Activated CD4-positive, alpha-beta memory T cell treated with anti-CD3 and anti-CD28 coated beads for 36 hours (primary cell): ENCODE measurements at regions of chr12 and their contacts with region 1.

Region 1: GRCh38 chr12:45990468-45991283 is at the start of gene SCAF11:
- DNase-seq: peak; percentile 100
- H3K4me3 Mint-ChIP-seq: peak within 1 kb of the TSS; percentile 97
- H3K27ac Mint-ChIP-seq: peak within 1 kb of the TSS; percentile 99
- H3K4me1 Mint-ChIP-seq: peaks cover 40% of the 10 kb centered on the region
- H3K27me3 Mint-ChIP-seq: peaks cover 3% of the 10 kb centered on the region
- total RNA-seq, gene SCAF11: 114 to 116 TPM

Region 2: DNA sequence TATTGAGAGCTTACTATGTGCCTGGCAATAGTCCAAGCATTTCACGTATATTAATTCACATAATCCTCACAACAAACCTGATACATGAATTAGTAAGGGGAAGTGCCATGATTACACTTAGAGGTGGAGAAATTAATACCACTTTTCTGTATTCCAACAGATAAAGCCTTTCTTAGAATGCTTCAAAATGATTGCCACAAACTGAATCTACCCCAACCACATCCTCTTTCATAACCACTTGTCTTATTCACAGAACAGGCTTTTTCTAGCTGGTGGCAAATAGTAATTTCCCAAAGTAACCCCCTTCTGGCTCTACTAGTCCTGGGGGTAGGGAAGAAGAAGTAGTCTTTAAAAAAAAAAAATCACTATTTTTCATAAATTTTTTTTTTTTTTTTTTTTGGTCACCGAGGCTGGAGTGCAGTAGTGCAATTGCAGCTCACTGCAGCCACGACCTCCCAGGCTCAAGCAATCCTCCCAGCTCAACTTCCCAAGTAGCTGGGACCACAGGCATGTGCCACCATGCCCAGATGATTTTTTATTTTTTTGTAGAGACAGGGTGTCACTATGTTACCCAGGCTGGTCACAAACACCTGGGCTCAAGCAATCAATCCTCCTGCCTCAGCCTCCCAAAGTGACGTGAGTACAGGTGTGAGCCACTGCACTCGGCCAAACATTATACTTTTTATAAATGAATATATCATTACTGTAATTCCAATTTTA is 320.2 kb before region 1 on chr12:
- CTCF ChIA-PET with region 1: no interaction called
- POLR2A ChIA-PET with region 1: no interaction called
- intact Hi-C with region 1: loop called (anchors 10 kb)
- DNase-seq: no peak
- H3K4me3 Mint-ChIP-seq: no peak overlapping the region
- H3K27ac Mint-ChIP-seq: no peak overlapping the region
- H3K4me1 Mint-ChIP-seq: peaks cover 27% of the 10 kb centered on the region
- H3K27me3 Mint-ChIP-seq: no peaks in the 10 kb centered on the region

Region 3: GRCh38 chr12:46124848-46125619 is 134.4 kb after region 1 on chr12:
- CTCF ChIA-PET with region 1: interaction called, 5 read pairs
- POLR2A ChIA-PET with region 1: no interaction called
- intact Hi-C with region 1: loop called (anchors 5 kb)
- DNase-seq: peak; percentile 60
- H3K4me3 Mint-ChIP-seq: peak overlapping the region; percentile 34
- H3K27ac Mint-ChIP-seq: peak overlapping the region; percentile 21
- H3K4me1 Mint-ChIP-seq: peaks cover 5% of the 10 kb centered on the region
- H3K27me3 Mint-ChIP-seq: peaks cover 12% of the 10 kb centered on the region

Region 4: DNA sequence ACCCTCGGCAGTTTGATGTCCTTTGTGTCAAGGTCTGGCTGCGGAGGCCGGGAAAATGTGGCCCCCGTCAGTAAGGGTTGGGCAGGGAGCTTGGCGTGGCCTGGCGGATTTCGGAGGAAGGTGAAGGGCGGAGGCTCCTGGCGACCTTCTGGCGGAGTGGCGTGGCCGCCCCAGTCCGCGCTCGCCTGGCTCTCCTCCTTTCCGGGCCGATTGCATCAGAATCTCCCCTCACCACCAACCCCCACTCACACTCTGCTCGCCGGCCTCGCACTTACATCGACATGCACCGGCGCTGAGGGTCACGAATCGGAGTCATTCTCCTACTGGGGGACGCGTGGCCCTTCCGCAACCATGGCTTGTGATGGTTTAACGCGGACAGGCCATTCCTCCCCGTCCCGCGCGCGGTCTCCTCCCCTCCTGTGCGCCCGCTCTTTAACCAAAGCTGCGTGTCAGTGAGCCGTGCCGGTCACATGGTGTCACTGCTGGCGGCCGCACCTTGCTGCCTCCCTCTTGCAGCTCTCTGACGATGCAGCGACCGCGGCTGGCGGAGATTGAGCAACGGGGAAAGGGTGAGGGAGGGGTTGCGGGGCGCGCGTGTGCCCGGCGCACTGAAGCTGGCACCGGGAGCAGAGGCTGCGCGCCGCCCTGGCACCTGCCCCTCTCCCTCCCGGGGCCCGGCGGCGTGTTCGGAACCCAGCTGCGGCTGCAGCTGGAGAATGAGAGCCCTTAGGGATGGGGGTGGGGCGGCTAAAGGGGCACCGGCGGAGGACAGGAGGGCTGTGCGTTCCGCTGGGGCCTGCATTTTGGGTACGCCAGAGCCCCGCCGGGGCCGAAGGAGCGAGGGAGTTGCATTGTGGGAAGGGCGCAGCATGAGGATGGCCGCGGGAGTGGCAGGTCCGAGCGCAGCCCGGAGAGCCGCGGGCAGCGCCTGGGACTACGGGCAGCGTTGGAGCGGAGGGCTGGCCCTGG is 278.2 kb after region 1 on chr12 and contains the start of gene SLC38A1:
- CTCF ChIA-PET with region 1: no interaction called
- POLR2A ChIA-PET with region 1: interaction called, 32 read pairs
- intact Hi-C with region 1: loop called (anchors 1 kb)
- DNase-seq: peak; percentile 92
- H3K4me3 Mint-ChIP-seq: no peak within 1 kb of the TSS
- H3K27ac Mint-ChIP-seq: no peak within 1 kb of the TSS
- H3K4me1 Mint-ChIP-seq: peaks cover 23% of the 10 kb centered on the region
- H3K27me3 Mint-ChIP-seq: no peaks in the 10 kb centered on the region
- total RNA-seq, gene SLC38A1: 142 TPM

Region 5: GRCh38 chr12:46382964-46383653 is 392.4 kb after region 1 on chr12:
- CTCF ChIA-PET with region 1: no interaction called
- POLR2A ChIA-PET with region 1: no interaction called
- intact Hi-C with region 1: loop called (anchors 1 kb)
- DNase-seq: peak; percentile 96
- H3K4me3 Mint-ChIP-seq: peak overlapping the region; percentile 80
- H3K27ac Mint-ChIP-seq: peak overlapping the region; percentile 92
- H3K4me1 Mint-ChIP-seq: peaks cover 27% of the 10 kb centered on the region
- H3K27me3 Mint-ChIP-seq: no peaks in the 10 kb centered on the region

Region 6: GRCh38 chr12:46661110-46661845 is 670.6 kb after region 1 on chr12:
- CTCF ChIA-PET with region 1: no interaction called
- POLR2A ChIA-PET with region 1: no interaction called
- intact Hi-C with region 1: loop called (anchors 10 kb)
- DNase-seq: no peak
- H3K4me3 Mint-ChIP-seq: no peak overlapping the region
- H3K27ac Mint-ChIP-seq: no peak overlapping the region
- H3K4me1 Mint-ChIP-seq: peaks cover 34% of the 10 kb centered on the region
- H3K27me3 Mint-ChIP-seq: no peaks in the 10 kb centered on the region